Posterior cingulate gyrus (tissue), 11 donors: ENCODE measurements at regions of chr5 and their contacts with region 1.

Region 1: DNA sequence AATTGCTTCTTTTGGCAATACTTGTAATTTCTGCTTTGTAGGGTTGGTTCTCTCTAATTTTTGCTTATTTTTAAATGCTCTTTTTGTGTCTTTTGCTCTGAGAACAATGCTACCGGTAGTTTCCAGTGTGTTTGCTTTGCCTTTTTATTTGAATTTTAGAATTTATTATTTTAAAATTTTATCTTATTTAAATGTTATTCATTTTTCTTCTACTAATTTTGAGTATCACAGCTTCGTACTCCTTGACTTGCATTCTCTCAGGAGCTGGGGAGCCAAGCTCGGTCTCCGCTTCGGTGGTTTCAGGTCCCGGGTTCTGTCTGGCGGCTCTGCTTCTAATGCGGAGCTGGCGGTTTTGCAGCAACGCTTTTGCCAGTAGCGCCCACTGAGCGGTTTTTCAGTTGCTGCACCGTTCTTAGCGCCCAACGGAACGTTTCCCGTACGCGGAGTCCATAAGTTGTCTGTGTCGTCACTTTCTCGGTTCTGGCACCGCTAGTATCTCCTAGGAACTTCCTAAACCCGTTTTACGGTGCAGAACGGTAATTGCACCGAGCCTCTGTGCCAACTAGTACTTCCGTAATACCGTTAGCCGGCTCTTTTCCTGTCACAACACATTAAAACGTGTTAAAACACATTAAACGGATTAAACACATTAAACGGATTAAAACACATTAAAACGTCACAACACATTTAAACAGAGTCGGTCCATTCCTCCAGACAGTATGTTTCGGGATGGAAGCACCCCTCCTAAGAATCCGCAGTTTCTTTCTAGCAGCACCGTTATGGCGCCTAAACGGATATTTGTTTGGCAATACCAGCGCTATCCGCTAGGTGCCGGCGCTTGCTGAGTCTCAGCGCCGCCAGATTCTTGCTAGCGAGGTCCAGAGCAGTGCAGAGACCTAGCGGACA is 45.6 kb downstream of the ANXA2R start:
- DNase-seq: peak in 8 of 10 donors; percentile 46 to 93 (median 76)

Region 2: DNA sequence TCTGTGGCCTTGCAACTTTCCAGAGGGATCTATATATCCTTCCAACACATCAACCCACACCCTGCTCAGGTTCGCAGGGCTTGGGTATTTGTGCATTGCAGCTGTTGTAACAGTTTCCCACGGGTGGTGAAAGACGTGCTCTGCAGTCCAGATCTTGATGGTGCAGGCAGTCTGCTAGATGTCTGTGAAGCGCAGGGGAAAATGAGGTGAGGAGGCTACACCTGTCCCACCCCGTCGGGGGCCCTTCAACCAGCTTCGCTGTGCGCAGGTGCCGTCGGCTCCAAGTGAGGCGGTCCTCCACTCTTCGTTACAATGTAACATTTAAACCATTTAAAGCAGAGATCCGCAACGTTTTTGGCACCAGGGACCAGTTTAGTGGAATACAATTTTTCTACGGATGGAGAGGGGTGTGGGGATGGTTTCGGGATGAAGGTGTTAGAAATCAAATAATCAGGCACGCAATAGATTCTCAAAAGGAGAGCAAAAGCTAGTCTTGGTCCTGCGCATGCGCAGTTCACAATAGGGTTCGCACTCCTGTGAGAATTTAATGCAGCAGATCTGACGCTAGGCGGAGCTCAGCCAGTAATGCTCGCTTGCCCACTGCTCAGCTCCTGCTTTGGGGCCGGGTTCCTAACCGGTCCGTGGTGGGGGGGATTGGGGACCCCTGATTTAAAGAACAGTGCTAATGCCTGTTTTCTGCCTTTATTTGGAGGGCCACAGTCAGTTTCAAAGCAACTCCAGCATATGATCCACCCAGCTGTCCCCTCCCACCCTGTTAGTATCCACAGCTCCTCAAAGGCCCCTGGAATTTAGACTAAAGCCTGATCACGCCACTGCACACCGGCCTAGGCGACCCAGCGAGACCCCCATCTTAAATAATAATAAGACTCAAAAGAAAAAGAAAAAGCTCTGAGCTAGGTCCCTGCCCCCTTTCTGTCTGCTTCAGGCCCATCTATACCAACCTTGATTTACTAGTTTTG is 85.7 kb before region 1 on chr5:
- intact Hi-C with region 1: loop called (anchors 5 kb)
- DNase-seq: peak; percentile 85 to 98 (median 90)

Region 3: GRCh38 chr5:42950440-42951292 is 43.8 kb before region 1 on chr5:
- intact Hi-C with region 1: loop called (anchors 5 kb)
- DNase-seq: peak in 1 of 10 donors; percentile 20

Region 4: GRCh38 chr5:43040287-43041098 is 46.0 kb after region 1 on chr5 and contains the start of gene ANXA2R:
- intact Hi-C with region 1: loop called (anchors 1 kb)
- DNase-seq: peak in 7 of 10 donors; percentile 52 to 94 (median 80)

Region 5: DNA sequence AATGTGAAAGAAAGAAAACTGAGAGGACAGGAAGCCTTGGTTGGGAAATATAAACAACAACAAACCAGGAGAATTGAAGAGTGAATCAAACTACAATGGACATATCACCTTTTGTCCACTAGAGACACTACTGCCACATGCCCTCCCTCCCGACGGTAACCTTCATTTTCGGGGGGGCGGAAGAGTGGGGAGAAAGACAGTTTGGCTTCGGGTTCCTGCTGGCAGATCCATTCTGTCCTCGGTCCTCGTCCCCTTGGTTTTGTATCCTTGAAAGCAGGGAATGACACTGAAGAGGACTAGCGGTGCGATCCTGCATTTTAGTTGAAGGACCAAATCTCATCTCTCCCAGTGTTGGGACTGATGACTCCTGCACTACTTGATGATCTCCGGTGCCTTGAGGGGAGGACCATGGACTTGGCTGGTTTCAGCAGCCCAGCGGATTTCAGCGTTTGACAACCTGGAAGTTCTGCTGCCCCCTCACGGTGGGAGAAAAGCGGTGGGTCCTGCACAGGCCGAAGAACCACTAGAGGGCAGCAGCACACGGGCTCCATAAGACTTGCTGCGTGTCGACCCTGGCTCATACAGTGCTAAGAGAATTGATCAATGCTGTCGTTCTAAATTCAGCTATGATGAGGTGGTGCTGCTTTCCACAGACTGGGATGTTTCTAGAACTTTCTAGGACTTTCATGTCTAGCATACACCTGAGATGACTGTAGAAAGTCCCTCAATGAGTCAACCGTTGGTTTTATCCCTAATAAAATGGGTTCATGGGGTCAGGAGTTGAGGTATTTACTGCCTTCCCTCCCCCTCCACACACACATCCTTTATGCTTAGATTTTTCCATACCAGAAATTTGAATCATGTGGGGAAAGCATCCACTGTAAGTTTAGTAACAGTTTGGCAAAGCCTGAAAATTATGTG is 111.1 kb after region 1 on chr5:
- intact Hi-C with region 1: no loop called
- DNase-seq: peak; percentile 61 to 97 (median 85)